Right lobe of liver (tissue), 6 donors: ENCODE measurements at regions of chr12 and their contacts with region 1.

Region 1: GRCh38 chr12:52029686-52030085 is 21.6 kb upstream of the NR4A1 start:
- DNase-seq: no peak
- ATAC-seq: no peak
- H3K4me3 ChIP-seq: no peak overlapping the region
- H3K27ac ChIP-seq: no peak overlapping the region
- H3K4me1 ChIP-seq: peaks cover 0 to 21% (median 0%) of the 10 kb centered on the region in 4 donors
- H3K27me3 ChIP-seq: no peaks in the 10 kb centered on the region
- CTCF ChIP-seq: no peak
- POLR2A ChIP-seq: no peak

Region 2: GRCh38 chr12:52063981-52064649 is 34.4 kb after region 1 on chr12:
- intact Hi-C with region 1: no loop called
- DNase-seq: no peak
- ATAC-seq: peak in 2 of 4 donors; percentile 8 to 20
- H3K4me3 ChIP-seq: no peak overlapping the region
- H3K27ac ChIP-seq: no peak overlapping the region
- H3K4me1 ChIP-seq: no peaks in the 10 kb centered on the region
- H3K27me3 ChIP-seq: no peaks in the 10 kb centered on the region
- CTCF ChIP-seq: no peak
- POLR2A ChIP-seq: no peak

Region 3: GRCh38 chr12:52074971-52075724 is 45.5 kb after region 1 on chr12:
- intact Hi-C with region 1: loop called (anchors 5 kb)
- DNase-seq: peak in 1 of 3 donors; percentile 0
- ATAC-seq: no peak
- H3K4me3 ChIP-seq: no peak overlapping the region
- H3K27ac ChIP-seq: no peak overlapping the region
- H3K4me1 ChIP-seq: peaks cover 0 to 26% (median 7%) of the 10 kb centered on the region in 4 donors
- H3K27me3 ChIP-seq: no peaks in the 10 kb centered on the region
- CTCF ChIP-seq: no peak
- POLR2A ChIP-seq: no peak

Region 4: DNA sequence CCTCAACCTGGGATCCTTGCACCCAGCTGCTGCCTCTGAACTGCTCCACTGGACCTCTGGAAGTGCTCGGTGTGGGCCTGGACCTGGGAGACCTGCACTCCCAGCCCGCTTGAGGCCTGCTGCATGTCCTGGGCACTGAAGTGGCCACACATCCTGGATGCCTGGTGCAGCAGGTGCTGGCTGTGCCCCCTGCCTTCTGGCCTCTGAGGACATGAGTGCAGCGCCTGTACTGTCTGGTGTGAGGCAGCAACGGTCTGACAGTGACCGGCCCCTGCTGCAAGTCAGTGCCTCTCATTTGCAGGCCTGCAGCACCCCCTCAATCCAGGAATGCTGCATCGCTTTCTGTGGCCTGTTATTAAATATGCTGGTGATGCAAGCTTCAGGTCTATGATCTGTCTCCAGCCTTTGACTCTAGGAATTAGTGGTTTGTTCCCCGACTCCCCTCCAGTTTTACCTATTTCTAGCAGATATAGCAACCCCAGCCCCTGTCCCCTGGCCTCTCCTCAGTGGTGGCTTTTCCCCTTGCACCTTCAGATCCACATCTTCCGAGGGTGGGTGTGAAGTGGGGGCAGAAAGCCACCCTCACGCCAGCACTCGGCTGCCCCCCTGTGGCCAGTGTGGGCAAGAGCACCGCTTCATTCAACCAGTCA is 53.4 kb after region 1 on chr12:
- intact Hi-C with region 1: loop called (anchors 5 kb)
- DNase-seq: peak in 2 of 3 donors; percentile 55 to 60
- ATAC-seq: peak; percentile 47 to 68 (median 58)
- H3K4me3 ChIP-seq: no peak overlapping the region
- H3K27ac ChIP-seq: peak overlapping the region in 2 of 3 donors; percentile 66 to 67
- H3K4me1 ChIP-seq: peaks cover 0 to 34% (median 12%) of the 10 kb centered on the region in 4 donors
- H3K27me3 ChIP-seq: no peaks in the 10 kb centered on the region
- CTCF ChIP-seq: peak; percentile 90 to 98 (median 98)
- POLR2A ChIP-seq: no peak

Region 5: DNA sequence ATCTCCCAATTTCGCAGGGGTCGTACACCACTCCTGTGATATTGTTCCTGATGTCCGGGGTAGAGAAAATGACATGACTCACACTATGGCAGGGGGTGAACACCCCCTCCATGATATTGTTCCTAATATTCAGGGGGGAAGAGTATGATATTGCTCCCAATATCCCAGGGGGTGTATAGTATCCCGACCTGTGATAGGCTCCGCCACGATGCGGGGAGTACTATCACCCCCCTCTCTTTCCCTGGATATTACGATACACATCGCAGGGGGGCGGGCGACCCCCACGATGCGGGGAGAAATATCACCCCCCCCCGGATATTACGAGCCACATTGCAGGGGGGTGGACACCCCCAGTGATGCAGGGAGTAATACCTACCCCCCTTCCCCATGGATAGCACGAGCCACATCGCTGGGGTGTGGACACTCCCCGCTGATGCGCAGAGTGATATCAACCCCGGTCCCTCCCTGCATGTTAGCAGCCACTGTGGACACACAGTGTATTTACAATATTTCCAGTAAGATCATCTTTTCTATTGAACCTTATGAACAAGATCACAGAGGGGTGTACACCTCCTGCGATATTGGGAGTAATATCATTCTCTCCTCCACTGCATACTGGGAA is 67.5 kb after region 1 on chr12:
- intact Hi-C with region 1: no loop called
- DNase-seq: no peak
- ATAC-seq: no peak
- H3K4me3 ChIP-seq: no peak overlapping the region
- H3K27ac ChIP-seq: no peak overlapping the region
- H3K4me1 ChIP-seq: peaks cover 0 to 19% (median 7%) of the 10 kb centered on the region in 4 donors
- H3K27me3 ChIP-seq: no peaks in the 10 kb centered on the region
- CTCF ChIP-seq: no peak
- POLR2A ChIP-seq: no peak